ENCODE measurements at regions of chr15 and their contacts with region 1.

Region 1: DNA sequence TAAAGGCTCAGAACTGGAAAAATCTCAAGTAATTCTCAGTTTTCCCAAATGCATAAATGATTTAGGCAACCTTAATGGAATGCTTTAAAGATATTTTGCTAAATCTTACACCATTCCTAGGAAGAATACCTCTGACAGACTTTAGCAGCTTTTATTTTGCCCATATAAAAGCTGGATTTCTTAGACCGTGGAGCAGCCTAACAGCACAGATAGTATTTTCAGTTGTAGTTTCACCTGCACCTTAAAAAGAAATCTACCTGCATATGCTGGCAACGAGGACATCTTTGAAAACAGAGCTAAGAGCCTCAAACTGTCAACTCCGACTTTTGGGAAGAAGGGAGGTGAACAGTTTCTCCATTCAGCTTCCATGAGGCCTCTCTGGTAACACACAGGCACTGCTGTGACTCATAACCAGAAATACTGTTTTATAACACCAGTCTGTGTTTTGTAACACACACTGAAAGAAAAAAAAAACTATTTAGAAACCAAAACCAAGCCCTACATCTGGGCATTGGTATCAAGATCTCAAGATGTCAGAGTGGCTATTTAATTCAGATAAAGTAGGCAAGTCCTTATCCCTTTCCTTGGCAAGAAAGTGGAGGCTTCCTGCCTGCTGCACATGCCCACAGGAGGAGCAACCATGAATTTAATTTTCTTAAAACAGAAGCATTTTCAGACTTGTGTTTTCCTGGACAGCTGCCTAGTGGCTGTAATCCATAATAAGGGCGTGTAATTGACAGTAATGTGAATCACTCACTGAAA is 181.5 kb upstream of the ICE2 start:
- DNase-seq: no peak
- ATAC-seq: peak; percentile 96
- H3K4me3 Mint-ChIP-seq: no peak overlapping the region
- H3K27ac Mint-ChIP-seq: peak overlapping the region; percentile 64
- H3K4me1 Mint-ChIP-seq: peaks cover 22% of the 10 kb centered on the region
- H3K27me3 Mint-ChIP-seq: no peaks in the 10 kb centered on the region

Region 2: GRCh38 chr15:60649845-60650548 is 10.5 kb before region 1 on chr15:
- CTCF ChIA-PET with region 1: interaction called, 20 read pairs
- DNase-seq: peak; percentile 66
- ATAC-seq: peak; percentile 86
- H3K4me3 Mint-ChIP-seq: peak overlapping the region; percentile 63
- H3K27ac Mint-ChIP-seq: peak overlapping the region; percentile 88
- H3K4me1 Mint-ChIP-seq: peaks cover 40% of the 10 kb centered on the region
- H3K27me3 Mint-ChIP-seq: peaks cover 6% of the 10 kb centered on the region